Pancreas (tissue), 10 donors: ENCODE measurements at regions of chr6 and their contacts with region 1.

Region 1: DNA sequence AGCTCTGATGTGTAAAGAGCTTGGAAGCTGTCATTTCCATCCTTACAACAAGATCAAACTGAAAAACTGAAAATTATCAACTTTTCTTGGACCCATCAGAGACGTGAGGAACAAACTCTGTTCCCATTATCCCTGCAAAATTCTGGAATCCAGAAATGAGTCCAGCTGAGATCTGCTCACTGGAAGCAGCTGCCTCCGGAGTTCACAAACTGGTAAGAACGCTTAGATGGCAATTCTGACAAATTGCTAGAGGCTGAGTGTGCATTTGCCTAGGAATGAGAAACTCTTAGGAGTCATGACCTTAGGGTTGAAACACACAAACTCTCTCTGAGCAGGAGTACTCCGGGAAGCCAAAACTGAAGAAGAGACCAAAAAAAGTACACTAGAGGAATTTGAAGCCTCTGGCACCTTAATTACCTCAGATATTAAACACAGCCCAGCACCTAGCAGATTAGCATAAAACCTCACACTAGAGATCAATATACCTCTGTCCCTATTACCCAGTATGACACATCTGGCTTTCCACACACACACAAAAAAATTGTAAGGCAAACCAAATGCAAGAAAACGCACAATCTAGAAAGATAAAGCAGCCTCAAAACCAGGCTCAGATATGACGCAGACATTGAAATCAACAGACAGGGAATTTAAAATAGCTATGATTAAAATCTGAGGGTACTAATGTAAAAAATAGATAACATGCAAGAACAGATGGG is 233.5 kb upstream of the SGK1 start:
- DNase-seq: no peak
- ATAC-seq: peak in 1 of 4 donors; percentile 46
- H3K4me3 ChIP-seq: no peak overlapping the region
- H3K27ac ChIP-seq: no peak overlapping the region
- H3K4me1 ChIP-seq: peaks cover 0 to 2% (median 0%) of the 10 kb centered on the region in 3 donors
- H3K27me3 ChIP-seq: no peaks in the 10 kb centered on the region
- CTCF ChIP-seq: no peak

Region 2: GRCh38 chr6:134457941-134458340 is 93.5 kb before region 1 on chr6:
- intact Hi-C with region 1: loop called in 1 of 3 experiments (anchors 5 kb)
- DNase-seq: no peak
- ATAC-seq: no peak
- H3K4me3 ChIP-seq: no peak overlapping the region
- H3K27ac ChIP-seq: no peak overlapping the region
- H3K4me1 ChIP-seq: peaks cover 0 to 17% (median 10%) of the 10 kb centered on the region in 3 donors
- H3K27me3 ChIP-seq: no peaks in the 10 kb centered on the region
- CTCF ChIP-seq: no peak